ENCODE measurements at regions of chr14 and their contacts with region 1.

Region 1: DNA sequence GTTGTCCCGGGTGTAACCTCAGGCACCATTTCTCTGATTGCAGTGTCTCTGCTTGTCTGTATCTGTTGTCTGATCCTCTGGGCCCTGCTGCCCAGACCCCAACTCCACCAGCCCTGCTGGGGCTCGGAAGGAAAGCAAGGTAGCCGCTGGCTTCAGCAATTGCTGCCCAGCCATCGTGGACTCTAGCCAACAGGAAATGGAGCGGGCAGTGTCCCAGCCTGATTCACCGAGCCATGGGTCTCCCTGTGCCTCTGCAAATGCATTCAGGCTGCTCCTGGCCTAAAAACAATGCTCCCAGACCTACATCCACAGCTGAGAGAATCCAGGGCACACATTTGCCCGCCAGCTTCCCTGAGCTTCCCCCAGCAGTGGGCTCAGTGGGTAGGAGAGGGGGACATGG is 9.2 kb downstream of the TUNAR start:
- DNase-seq: no peak
- H3K4me3 ChIP-seq: no peak overlapping the region
- H3K27ac ChIP-seq: no peak overlapping the region
- H3K4me1 ChIP-seq: peaks cover 70% of the 10 kb centered on the region
- CTCF ChIP-seq: no peak

Region 2: DNA sequence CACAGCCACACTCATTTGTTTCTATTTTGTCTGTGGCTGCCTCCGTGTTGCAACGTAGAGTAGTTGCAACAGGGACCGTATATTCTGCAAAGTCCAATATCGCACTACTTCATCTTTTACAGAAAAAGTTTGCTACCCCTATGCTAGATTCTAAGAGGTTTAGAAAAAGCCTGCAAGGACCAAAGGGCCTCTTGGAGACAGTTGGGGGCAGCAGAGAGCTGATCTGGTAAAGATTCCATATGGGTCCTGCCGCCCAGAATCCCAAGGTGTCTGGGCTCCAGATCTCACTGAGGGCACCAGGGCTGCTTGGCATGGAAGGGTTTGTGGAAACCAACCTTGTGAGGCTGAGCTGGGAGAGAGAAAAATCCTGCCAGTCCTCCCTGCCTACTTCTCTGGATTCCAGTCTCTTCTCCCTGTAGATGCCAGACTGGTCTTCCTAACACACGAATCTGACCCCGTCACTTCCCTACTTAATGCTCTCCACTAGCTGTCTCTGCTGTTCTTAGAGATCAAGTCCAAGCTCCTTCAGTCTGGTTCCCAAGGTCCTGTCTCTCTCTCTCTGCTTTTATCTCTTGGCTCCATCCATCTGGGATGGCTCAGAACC is 276.4 kb before region 1 on chr14:
- CTCF ChIA-PET with region 1: no interaction called
- POLR2A ChIA-PET with region 1: no interaction called
- intact Hi-C with region 1: loop called (anchors 5 kb)
- DNase-seq: peak; percentile 81
- H3K4me3 ChIP-seq: no peak overlapping the region
- H3K27ac ChIP-seq: no peak overlapping the region
- H3K4me1 ChIP-seq: peaks cover 26% of the 10 kb centered on the region
- CTCF ChIP-seq: peak; percentile 97

Region 3: DNA sequence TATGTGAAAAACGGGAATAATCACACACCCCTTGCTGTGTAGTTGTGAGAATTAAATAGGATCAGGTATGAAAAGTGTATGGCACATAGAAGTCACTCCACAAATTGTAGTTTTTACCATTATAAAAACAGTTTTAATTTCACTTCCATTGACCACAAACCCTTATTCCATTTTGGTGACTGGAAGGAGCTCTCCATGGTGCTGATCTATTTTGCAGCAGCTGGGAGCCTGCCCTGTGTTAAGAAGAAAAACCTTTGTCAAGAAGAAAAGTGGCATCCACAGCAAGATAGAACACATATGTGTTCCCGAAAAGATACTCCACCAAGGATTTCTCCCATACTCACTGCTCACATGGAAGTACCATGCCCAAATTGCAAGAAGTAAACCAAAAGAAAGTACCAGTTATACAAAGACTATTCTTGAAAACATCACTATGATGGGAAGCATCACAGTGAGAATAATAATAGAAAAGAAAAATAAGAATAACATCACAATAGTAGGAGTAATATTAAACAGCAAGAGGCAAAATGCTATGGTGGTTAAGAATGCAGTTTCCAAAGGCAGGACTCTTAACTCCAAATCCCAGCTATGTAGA is 49.5 kb after region 1 on chr14:
- CTCF ChIA-PET with region 1: no interaction called
- POLR2A ChIA-PET with region 1: no interaction called
- intact Hi-C with region 1: no loop called
- DNase-seq: peak; percentile 45
- H3K4me3 ChIP-seq: no peak overlapping the region
- H3K27ac ChIP-seq: no peak overlapping the region
- H3K4me1 ChIP-seq: no peaks in the 10 kb centered on the region
- CTCF ChIP-seq: no peak

Measured in OCI-LY7 (cell line).